ENCODE measurements at regions of chr9 and their contacts with region 1.

Region 1: DNA sequence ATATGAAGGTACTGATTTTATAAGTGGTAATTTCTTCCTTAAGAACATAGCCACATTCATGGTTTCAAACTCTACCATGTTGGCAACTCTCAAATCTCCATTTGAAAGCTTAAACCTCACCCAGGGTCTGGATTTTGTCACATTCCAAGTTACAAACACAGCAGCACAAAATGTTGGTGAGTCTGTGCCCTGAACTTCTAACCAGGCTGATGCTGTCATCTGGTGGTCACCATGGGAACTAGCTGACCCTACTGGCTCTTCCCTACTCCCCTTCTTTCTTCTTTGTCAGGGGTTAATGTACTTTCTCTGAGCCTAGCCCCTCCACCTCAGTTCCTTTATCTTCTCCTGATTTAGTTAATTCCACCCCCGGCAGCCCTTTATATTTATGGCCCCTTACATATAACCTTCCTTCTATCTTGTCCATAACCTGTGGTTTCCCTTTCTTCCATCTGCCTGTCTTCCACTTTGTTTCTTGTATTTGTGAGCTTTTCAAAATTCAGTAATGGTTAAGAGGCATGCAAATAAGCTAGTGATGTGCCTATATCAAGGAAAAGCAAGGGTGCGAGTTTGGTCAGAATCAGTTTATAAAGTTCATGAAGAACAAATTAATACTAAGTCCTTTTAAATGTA is 35.9 kb downstream of the TGFBR1 start:
- DNase-seq: peak in 8 of 9 donors; percentile 30 to 67 (median 54)
- ATAC-seq: peak; percentile 84
- H3K4me3 ChIP-seq: no peak overlapping the region
- H3K4me3 Mint-ChIP-seq: peak overlapping the region in 7 of 10 donors; percentile 1 to 32 (median 6)
- H3K27ac ChIP-seq: no peak overlapping the region
- H3K27ac Mint-ChIP-seq: peak overlapping the region; percentile 24 to 78 (median 66)
- H3K4me1 ChIP-seq: peaks cover 10 to 28% of the 10 kb centered on the region in 2 donors
- H3K4me1 Mint-ChIP-seq: peaks cover 35 to 56% (median 50%) of the 10 kb centered on the region in 7 donors
- H3K27me3 ChIP-seq: no peaks in the 10 kb centered on the region
- H3K27me3 Mint-ChIP-seq: no peaks in the 10 kb centered on the region

Region 2: GRCh38 chr9:98807070-98807810 is 333.6 kb before region 1 on chr9 and contains the start of gene GALNT12:
- CTCF ChIA-PET with region 1: interaction called, 6 read pairs
- POLR2A ChIA-PET with region 1: interaction called, 3 read pairs
- intact Hi-C with region 1: loop called (anchors 5 kb)
- DNase-seq: peak; percentile 31 to 60 (median 48)
- ATAC-seq: peak; percentile 87
- H3K4me3 ChIP-seq: peak within 1 kb of the TSS; percentile 56
- H3K4me3 Mint-ChIP-seq: peak within 1 kb of the TSS; percentile 80 to 95 (median 92)
- H3K27ac ChIP-seq: peak within 1 kb of the TSS; percentile 12
- H3K27ac Mint-ChIP-seq: peak within 1 kb of the TSS; percentile 7 to 91 (median 71)
- H3K4me1 ChIP-seq: peaks cover 11 to 16% of the 10 kb centered on the region in 2 donors
- H3K4me1 Mint-ChIP-seq: peaks cover 15 to 42% (median 37%) of the 10 kb centered on the region in 7 donors
- H3K27me3 ChIP-seq: no peaks in the 10 kb centered on the region
- H3K27me3 Mint-ChIP-seq: peaks cover 0 to 52% (median 0%) of the 10 kb centered on the region in 5 donors
- total RNA-seq, gene GALNT12: 6.2 to 14.3 (median 11.4) TPM

Region 3: GRCh38 chr9:98974994-98975712 is 165.6 kb before region 1 on chr9:
- CTCF ChIA-PET with region 1: interaction called, 83 read pairs
- POLR2A ChIA-PET with region 1: interaction called, 3 read pairs
- intact Hi-C with region 1: loop called (anchors 1 kb)
- DNase-seq: peak; percentile 55 to 86 (median 75)
- ATAC-seq: peak; percentile 94
- H3K4me3 ChIP-seq: peak overlapping the region; percentile 40
- H3K4me3 Mint-ChIP-seq: peak overlapping the region in 9 of 10 donors; percentile 40 to 75 (median 59)
- H3K27ac ChIP-seq: no peak overlapping the region
- H3K27ac Mint-ChIP-seq: no peak overlapping the region
- H3K4me1 ChIP-seq: no peaks in the 10 kb centered on the region
- H3K4me1 Mint-ChIP-seq: peaks cover 0 to 16% (median 5%) of the 10 kb centered on the region in 7 donors
- H3K27me3 ChIP-seq: no peaks in the 10 kb centered on the region
- H3K27me3 Mint-ChIP-seq: peaks cover 0 to 33% (median 10%) of the 10 kb centered on the region in 5 donors

Region 4: DNA sequence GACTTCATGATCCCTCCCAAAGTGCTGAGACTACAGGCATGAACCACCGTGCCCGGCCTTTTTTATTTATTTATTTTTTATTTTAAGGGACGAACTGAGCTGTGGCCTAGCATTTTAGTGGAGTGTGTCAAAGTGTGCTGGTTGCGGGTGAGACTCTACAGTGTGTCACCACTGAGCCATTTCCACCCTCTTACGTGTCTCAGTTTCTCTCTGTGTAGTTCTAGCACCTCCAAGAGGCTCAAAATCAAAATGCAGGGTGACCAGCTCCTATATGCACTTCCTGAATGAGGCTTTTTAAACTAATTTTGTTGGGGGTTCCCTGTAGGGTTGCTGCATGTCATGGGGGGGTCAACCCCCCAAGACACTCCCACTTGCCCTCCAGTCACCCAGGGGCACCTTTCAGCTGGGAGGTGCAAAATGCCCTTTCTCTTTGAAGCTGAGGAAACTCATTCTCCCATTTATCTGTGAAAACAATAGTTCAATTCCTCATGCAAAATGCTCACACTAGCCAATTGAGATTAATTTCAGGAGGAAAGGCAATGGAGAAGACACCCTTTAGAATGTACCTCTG is 127.8 kb before region 1 on chr9:
- CTCF ChIA-PET with region 1: interaction called, 16 read pairs
- POLR2A ChIA-PET with region 1: interaction called, 5 read pairs
- intact Hi-C with region 1: no loop called
- DNase-seq: peak in 2 of 9 donors; percentile 18 to 30
- ATAC-seq: peak; percentile 63
- H3K4me3 ChIP-seq: no peak overlapping the region
- H3K4me3 Mint-ChIP-seq: peak overlapping the region; percentile 33 to 86 (median 78)
- H3K27ac ChIP-seq: peak overlapping the region; percentile 41
- H3K27ac Mint-ChIP-seq: peak overlapping the region in 8 of 9 donors; percentile 82 to 97 (median 92)
- H3K4me1 ChIP-seq: peaks cover 19 to 21% of the 10 kb centered on the region in 2 donors
- H3K4me1 Mint-ChIP-seq: peaks cover 15 to 38% (median 24%) of the 10 kb centered on the region in 7 donors
- H3K27me3 ChIP-seq: no peaks in the 10 kb centered on the region
- H3K27me3 Mint-ChIP-seq: no peaks in the 10 kb centered on the region

Region 5: GRCh38 chr9:99112750-99113413 is 27.9 kb before region 1 on chr9:
- CTCF ChIA-PET with region 1: interaction called, 13 read pairs
- POLR2A ChIA-PET with region 1: interaction called, 73 read pairs
- intact Hi-C with region 1: loop called in 1 of 2 experiments (anchors 1 kb)
- DNase-seq: peak in 7 of 9 donors; percentile 73 to 88 (median 83)
- ATAC-seq: peak; percentile 97
- H3K4me3 ChIP-seq: peak overlapping the region; percentile 15
- H3K4me3 Mint-ChIP-seq: peak overlapping the region; percentile 62 to 83 (median 78)
- H3K27ac ChIP-seq: peak overlapping the region; percentile 34
- H3K27ac Mint-ChIP-seq: peak overlapping the region; percentile 65 to 90 (median 82)
- H3K4me1 ChIP-seq: peaks cover 81 to 82% of the 10 kb centered on the region in 2 donors
- H3K4me1 Mint-ChIP-seq: peaks cover 66 to 97% (median 93%) of the 10 kb centered on the region in 7 donors
- H3K27me3 ChIP-seq: no peaks in the 10 kb centered on the region
- H3K27me3 Mint-ChIP-seq: no peaks in the 10 kb centered on the region

Measured in naive thymus-derived CD4-positive, alpha-beta T cell (primary cell).